H1 (cell line): ENCODE measurements at regions of chr3 and their contacts with region 1.

Region 1: GRCh38 chr3:112979240-112979832 is 4.4 kb upstream of the CD200R1 start:
- DNase-seq: no peak
- H3K4me3 ChIP-seq: no peak overlapping the region
- H3K27ac ChIP-seq: no peak overlapping the region
- H3K4me1 ChIP-seq: no peaks in the 10 kb centered on the region
- H3K27me3 ChIP-seq: no peaks in the 10 kb centered on the region
- CTCF ChIP-seq: peak in 2 of 3 experiments; percentile 21 to 40; a peak in 2 of 4 replicates
- EP300 ChIP-seq: no peak
- POLR2A ChIP-seq: no peak
- RAD21 ChIP-seq: peak in 1 of 2 experiments; percentile 53

Region 2: GRCh38 chr3:112966633-112967032 is 12.7 kb before region 1 on chr3:
- CTCF ChIA-PET with region 1: interaction called, 16 read pairs
- POLR2A ChIA-PET with region 1: no interaction called
- DNase-seq: no peak
- H3K4me3 ChIP-seq: no peak overlapping the region
- H3K27ac ChIP-seq: no peak overlapping the region
- H3K4me1 ChIP-seq: no peaks in the 10 kb centered on the region
- H3K27me3 ChIP-seq: no peaks in the 10 kb centered on the region
- CTCF ChIP-seq: no peak
- EP300 ChIP-seq: no peak
- POLR2A ChIP-seq: no peak
- RAD21 ChIP-seq: no peak